ENCODE measurements at regions of chr12 and their contacts with region 1.

Region 1: GRCh38 chr12:116358536-116358892 is 81.0 kb upstream of the MED13L start:
- DNase-seq: no peak
- H3K4me3 Mint-ChIP-seq: no peak overlapping the region
- H3K27ac Mint-ChIP-seq: peak overlapping the region; percentile 71
- H3K4me1 Mint-ChIP-seq: no peaks in the 10 kb centered on the region
- H3K27me3 Mint-ChIP-seq: peaks cover 13% of the 10 kb centered on the region
- CTCF ChIP-seq: no peak

Region 2: DNA sequence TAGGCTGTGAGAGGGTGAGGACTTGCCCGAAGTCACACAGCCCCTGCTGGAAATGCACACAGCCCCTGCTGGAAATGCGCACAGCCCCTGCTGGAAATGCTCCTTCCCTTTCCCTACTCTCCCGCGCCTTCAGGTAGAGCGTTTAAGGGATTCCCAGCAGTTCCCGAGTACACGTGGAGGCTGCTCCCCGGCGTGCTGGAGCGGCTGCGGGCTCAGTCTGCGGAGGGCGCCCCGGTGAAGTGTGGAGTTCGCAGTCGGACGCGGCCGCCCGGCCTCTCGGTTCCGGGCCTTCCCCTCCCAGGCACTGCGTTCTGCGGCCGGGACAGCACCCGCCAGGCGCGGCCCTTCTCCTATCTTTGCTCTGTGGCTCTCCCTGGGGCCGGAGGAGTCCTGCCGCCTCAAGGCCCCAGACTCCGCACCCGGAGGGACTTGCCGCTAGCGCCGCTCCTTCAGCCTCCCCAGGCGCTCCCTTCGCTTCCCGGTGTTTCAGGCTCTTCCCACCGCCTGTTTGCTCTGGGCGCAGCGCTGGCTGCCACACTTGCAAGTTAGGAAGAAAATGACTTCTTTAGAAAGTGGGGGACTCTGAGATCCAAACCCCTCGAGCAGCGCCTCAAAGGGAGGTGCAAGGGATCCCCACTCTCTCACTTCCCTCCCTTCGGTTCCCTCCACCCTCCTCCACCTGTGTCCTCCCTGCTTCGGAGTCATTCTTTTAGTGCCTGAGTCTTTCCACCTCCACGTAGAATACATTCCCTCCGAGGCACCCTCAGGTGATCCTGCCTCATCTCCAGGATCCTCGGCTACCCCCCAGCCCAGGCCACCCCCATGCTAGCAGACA is 1944.3 kb before region 1 on chr12:
- CTCF ChIA-PET with region 1: interaction called, 10 read pairs
- intact Hi-C with region 1: no loop called
- DNase-seq: no peak
- H3K4me3 Mint-ChIP-seq: no peak overlapping the region
- H3K27ac Mint-ChIP-seq: no peak overlapping the region
- H3K4me1 Mint-ChIP-seq: no peaks in the 10 kb centered on the region
- H3K27me3 Mint-ChIP-seq: peaks cover 28% of the 10 kb centered on the region
- CTCF ChIP-seq: no peak

Measured in Calu3 (cell line).